Activated CD4-positive, alpha-beta memory T cell treated with anti-CD3 and anti-CD28 coated beads for 36 hours (primary cell): ENCODE measurements at regions of chr7 and their contacts with region 1.

Region 1: GRCh38 chr7:32479574-32480200 is 10.5 kb downstream of the LSM5 start:
- DNase-seq: no peak
- H3K4me3 Mint-ChIP-seq: no peak overlapping the region
- H3K27ac Mint-ChIP-seq: no peak overlapping the region
- H3K4me1 Mint-ChIP-seq: no peaks in the 10 kb centered on the region
- H3K27me3 Mint-ChIP-seq: no peaks in the 10 kb centered on the region

Region 2: DNA sequence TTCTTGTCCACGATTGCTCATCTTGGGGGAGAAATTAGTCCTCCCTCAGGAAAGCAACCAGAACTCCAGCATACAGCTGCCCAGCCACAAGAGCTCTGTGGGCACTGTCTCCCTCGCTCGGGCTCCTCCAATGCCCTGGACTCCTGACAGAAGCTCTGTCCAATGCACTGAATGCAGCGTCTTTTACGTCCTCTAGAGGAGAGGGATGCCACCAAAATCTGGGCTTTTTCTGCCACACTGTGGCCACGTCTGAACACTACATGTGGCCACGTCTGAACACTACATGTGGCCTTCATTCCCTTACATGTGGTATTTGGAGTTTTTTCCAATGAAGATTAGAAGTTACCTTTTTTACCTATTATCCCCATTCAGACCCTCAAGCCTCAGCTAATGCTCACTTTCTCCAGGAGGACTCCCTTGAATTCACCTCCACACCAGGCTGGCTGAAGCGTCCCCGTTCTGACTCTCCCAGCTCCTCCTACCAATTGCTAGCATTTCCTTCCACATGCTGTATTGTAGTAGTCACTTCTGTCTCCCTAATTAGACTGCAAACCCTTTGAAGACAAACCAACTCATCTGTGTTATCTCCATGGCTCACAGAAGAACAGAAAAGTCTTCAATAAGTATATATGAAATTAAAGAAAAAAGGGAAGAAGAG is 275.2 kb before region 1 on chr7:
- CTCF ChIA-PET with region 1: interaction called, 16 read pairs
- POLR2A ChIA-PET with region 1: no interaction called
- intact Hi-C with region 1: no loop called
- DNase-seq: peak; percentile 14
- H3K4me3 Mint-ChIP-seq: no peak overlapping the region
- H3K27ac Mint-ChIP-seq: no peak overlapping the region
- H3K4me1 Mint-ChIP-seq: no peaks in the 10 kb centered on the region
- H3K27me3 Mint-ChIP-seq: no peaks in the 10 kb centered on the region

Region 3: GRCh38 chr7:32364581-32364980 is 115.1 kb before region 1 on chr7:
- CTCF ChIA-PET with region 1: no interaction called
- POLR2A ChIA-PET with region 1: no interaction called
- intact Hi-C with region 1: no loop called
- DNase-seq: no peak
- H3K4me3 Mint-ChIP-seq: no peak overlapping the region
- H3K27ac Mint-ChIP-seq: no peak overlapping the region
- H3K4me1 Mint-ChIP-seq: no peaks in the 10 kb centered on the region
- H3K27me3 Mint-ChIP-seq: peaks cover 5% of the 10 kb centered on the region

Region 4: GRCh38 chr7:32536585-32536984 is 56.9 kb after region 1 on chr7:
- CTCF ChIA-PET with region 1: no interaction called
- POLR2A ChIA-PET with region 1: no interaction called
- intact Hi-C with region 1: no loop called
- DNase-seq: no peak
- H3K4me3 Mint-ChIP-seq: no peak overlapping the region
- H3K27ac Mint-ChIP-seq: no peak overlapping the region
- H3K4me1 Mint-ChIP-seq: peaks cover 28% of the 10 kb centered on the region
- H3K27me3 Mint-ChIP-seq: no peaks in the 10 kb centered on the region